ENCODE measurements at regions of chr12 and their contacts with region 1.

Region 1: DNA sequence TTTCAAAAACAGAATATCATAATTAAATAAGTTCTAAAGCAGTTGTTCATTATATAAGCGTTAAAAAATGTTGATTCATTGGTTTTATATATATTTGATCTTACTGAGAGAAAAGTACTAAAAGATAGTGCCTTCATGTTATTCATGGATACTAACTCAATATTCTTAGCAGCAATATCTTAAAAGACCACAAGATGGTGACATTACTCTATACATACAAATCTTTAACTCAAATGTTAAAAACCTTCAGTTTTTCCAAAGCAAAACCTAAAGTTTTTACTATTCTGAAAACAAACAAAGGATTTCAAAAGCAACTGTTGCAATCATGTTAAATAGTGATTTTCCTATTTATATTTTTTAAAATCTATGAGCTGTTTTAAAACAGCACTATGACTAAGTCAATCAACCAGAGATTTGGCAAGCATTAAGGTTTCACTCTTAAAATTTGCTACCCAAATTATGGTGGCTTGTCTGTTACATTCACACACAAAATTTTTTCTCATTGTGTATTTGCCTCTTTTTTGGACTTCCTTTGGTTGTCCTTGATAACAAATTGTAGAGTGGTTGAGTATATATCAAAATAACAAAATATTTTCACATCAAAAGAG is 50.1 kb upstream of the RERGL start:
- DNase-seq: no peak
- ATAC-seq: no peak

Region 2: DNA sequence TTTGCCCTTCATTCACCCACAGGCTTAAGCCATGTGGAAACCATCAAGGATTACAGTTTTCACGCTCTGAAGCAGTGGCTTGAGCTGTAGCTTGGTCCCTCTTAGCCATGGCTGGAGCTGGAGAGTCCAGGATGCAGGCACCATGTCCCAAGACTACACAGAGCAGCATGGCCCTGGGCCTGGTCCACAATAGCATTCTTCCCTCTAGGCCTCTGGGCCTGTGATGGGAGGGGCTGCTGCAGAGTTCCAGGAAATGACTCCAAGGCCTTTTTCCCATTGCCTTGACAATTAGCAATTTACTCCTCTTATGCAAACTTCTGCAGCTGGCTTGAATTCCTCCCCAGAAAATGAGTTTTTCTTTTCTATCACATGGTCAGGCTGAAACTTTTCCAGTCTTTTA is 261.4 kb before region 1 on chr12:
- intact Hi-C with region 1: no loop called
- DNase-seq: no peak
- ATAC-seq: no peak

Region 3: GRCh38 chr12:18224745-18225144 is 84.7 kb after region 1 on chr12:
- intact Hi-C with region 1: loop called (anchors 10 kb)
- DNase-seq: no peak
- ATAC-seq: no peak

Measured in Right ventricle myocardium inferior (tissue), 1 donor.